Transverse colon (tissue), 4 donors: ENCODE measurements at regions of chr5 and their contacts with region 1.

Region 1: DNA sequence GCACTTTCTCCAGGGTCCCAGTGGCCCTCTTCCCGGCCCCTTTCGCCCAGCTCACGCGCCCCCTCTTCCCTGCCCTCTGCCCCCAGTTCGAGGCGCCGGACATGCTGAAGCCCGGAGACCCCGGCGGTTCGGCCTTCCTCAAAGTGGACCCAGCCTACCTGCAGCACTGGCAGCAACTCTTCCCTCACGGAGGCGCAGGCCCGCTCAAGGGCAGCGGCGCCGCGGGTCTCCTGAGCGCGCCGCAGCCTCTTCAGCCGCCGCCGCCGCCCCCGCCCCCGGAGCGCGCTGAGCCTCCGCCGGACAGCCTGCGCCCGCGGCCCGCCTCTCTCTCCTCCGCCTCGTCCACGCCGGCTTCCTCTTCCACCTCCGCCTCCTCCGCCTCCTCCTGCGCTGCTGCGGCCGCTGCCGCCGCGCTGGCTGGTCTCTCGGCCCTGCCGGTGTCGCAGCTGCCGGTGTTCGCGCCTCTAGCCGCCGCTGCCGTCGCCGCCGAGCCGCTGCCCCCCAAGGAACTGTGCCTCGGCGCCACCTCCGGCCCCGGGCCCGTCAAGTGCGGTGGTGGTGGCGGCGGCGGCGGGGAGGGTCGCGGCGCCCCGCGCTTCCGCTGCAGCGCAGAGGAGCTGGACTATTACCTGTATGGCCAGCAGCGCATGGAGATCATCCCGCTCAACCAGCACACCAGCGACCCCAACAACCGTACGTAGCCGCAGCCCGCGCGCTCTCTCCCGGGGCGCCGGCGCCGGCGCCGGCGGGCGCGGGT is 1.1 kb downstream of the PRDM6 start:
- DNase-seq: no peak
- H3K4me3 ChIP-seq: peak overlapping the region; percentile 46 to 72 (median 56)
- H3K27ac ChIP-seq: peak overlapping the region; percentile 59 to 77 (median 68)
- H3K4me1 ChIP-seq: peaks cover 0 to 37% (median 25%) of the 10 kb centered on the region in 4 donors
- H3K27me3 ChIP-seq: peaks cover 99% of the 10 kb centered on the region
- CTCF ChIP-seq: no peak
- EP300 ChIP-seq: no peak
- POLR2A ChIP-seq: no peak

Region 2: GRCh38 chr5:123036391-123037103 is 53.5 kb before region 1 on chr5 and contains the start of gene PPIC:
- in situ Hi-C with region 1: no loop called
- intact Hi-C with region 1: loop called (anchors 5 kb)
- DNase-seq: peak; percentile 91
- H3K4me3 ChIP-seq: peak within 1 kb of the TSS; percentile 38 to 73 (median 68)
- H3K27ac ChIP-seq: peak within 1 kb of the TSS; percentile 91 to 93 (median 92)
- H3K4me1 ChIP-seq: peaks cover 0 to 16% (median 11%) of the 10 kb centered on the region in 4 donors
- H3K27me3 ChIP-seq: no peaks in the 10 kb centered on the region
- CTCF ChIP-seq: no peak
- EP300 ChIP-seq: peak; percentile 0
- POLR2A ChIP-seq: peak; percentile 84
- total RNA-seq, gene PPIC: 10.1 to 58.0 (median 38.8) TPM

Region 3: GRCh38 chr5:123157791-123158581 is 67.9 kb after region 1 on chr5:
- in situ Hi-C with region 1: no loop called
- intact Hi-C with region 1: loop called (anchors 10 kb)
- DNase-seq: no peak
- H3K4me3 ChIP-seq: no peak overlapping the region
- H3K27ac ChIP-seq: peak overlapping the region; percentile 51 to 82 (median 72)
- H3K4me1 ChIP-seq: peaks cover 0 to 22% (median 4%) of the 10 kb centered on the region in 4 donors
- H3K27me3 ChIP-seq: no peaks in the 10 kb centered on the region
- CTCF ChIP-seq: no peak
- EP300 ChIP-seq: no peak
- POLR2A ChIP-seq: no peak